Activated CD8-positive, alpha-beta memory T cell treated with anti-CD3 and anti-CD28 coated beads, Interleukin-2, amount 10 ng/mL, durations not matched to agents 7 days and 5 days (primary cell): ENCODE measurements at regions of chr19 and their contacts with region 1.

Region 1: DNA sequence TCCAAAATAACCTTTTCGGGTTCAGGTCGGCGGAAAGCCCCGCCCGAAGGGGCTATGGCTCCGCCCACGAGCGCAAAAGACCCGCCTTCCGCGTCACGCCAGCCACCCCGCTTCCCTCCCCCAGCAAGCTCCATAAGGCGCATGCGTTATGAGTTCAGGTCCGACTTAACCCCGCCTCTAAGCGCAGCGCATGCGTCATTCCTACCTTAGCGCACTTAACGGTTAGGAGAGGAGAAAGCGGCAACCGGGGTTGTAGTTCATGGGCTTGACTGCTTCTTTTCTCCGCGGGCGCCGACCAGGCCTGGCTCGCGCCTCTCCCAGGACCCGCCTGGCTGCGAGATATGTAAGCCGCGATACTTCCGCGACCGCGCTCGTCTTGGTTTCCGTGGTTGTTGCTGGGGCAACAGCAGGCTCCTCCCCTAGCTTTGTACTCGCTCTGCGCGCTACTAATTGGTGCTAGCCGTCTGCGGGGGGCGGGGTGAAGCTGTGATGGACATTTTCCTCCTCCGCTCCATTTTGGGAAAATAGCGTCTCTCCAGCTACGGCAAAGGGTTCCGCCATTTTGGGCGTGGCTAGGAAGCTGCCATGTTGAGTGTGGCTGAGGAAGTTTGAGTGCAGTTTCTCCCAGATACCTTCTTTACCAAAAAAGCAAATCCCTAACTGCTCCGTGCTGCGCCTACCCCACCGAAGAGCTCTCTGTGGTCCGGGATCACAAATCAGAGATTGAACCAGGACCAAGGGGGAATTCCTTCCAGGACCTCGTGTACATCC is at the start of gene B9D2:
- DNase-seq: peak; percentile 99
- ATAC-seq: peak; percentile 95
- H3K4me3 Mint-ChIP-seq: peak within 1 kb of the TSS; percentile 90
- H3K27ac Mint-ChIP-seq: peak within 1 kb of the TSS; percentile 95
- H3K4me1 Mint-ChIP-seq: peaks cover 27% of the 10 kb centered on the region
- H3K27me3 Mint-ChIP-seq: no peaks in the 10 kb centered on the region
- total RNA-seq, gene B9D2: 8.2 to 9.3 TPM

Region 2: GRCh38 chr19:41409288-41409687 is 45.4 kb after region 1 on chr19:
- CTCF ChIA-PET with region 1: no interaction called
- DNase-seq: no peak
- ATAC-seq: no peak
- H3K4me3 Mint-ChIP-seq: no peak overlapping the region
- H3K27ac Mint-ChIP-seq: no peak overlapping the region
- H3K4me1 Mint-ChIP-seq: peaks cover 10% of the 10 kb centered on the region
- H3K27me3 Mint-ChIP-seq: no peaks in the 10 kb centered on the region

Region 3: DNA sequence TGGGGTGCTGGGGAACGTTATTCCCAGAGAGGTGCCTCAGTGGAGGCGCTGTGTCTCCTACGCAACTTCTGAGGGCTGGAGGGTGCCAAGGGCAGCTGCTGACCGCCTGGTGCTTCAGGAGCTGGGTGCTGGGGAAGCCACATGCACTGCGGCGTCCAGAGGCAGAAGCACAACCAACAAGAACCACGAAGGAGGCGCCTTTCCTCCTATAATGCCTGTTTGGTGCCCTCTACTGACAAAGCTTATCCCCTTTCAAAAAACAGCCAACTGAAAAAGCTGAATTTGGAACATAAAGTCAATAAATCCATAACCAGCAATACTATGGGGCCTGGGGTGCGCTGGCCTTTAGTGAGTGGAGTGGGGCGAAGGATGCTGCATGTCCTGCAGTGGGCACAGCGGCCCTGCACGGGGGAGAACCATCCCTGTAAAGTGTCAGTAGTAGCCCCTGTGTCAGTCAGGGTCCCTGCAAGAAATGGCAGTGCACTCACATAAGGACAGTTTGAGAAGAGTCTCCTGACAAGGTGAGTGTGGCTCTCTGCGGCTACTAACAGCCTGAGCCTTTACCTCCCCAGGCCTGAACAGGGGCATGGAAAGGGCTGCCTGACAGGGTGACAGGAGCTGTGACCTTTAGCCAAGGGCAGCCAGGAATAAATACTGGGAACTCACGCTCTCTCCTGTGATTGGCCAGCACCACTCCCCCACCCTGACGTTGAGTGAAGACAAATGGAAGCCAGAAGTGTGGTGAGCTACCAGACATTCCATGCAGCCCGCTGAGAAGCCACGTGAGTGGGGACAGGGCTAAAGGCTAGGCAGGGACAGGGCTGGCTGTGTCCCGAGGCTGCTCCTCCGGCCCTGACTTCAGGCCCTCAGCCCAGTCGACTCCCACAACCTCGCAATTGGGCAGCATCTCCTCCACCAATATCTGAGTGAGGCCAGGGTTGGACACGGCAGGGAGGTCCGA is 67.8 kb after region 1 on chr19:
- CTCF ChIA-PET with region 1: interaction called, 12 read pairs
- DNase-seq: peak; percentile 48
- ATAC-seq: no peak
- H3K4me3 Mint-ChIP-seq: no peak overlapping the region
- H3K27ac Mint-ChIP-seq: no peak overlapping the region
- H3K4me1 Mint-ChIP-seq: peaks cover 28% of the 10 kb centered on the region
- H3K27me3 Mint-ChIP-seq: no peaks in the 10 kb centered on the region

Region 4: GRCh38 chr19:41439441-41440222 is 75.7 kb after region 1 on chr19 and contains the start of gene DMAC2:
- CTCF ChIA-PET with region 1: interaction called, 11 read pairs
- DNase-seq: peak; percentile 99
- ATAC-seq: peak; percentile 96
- H3K4me3 Mint-ChIP-seq: no peak within 1 kb of the TSS
- H3K27ac Mint-ChIP-seq: no peak within 1 kb of the TSS
- H3K4me1 Mint-ChIP-seq: peaks cover 19% of the 10 kb centered on the region
- H3K27me3 Mint-ChIP-seq: no peaks in the 10 kb centered on the region
- total RNA-seq, gene DMAC2: 43.2 to 56.5 TPM

Region 5: DNA sequence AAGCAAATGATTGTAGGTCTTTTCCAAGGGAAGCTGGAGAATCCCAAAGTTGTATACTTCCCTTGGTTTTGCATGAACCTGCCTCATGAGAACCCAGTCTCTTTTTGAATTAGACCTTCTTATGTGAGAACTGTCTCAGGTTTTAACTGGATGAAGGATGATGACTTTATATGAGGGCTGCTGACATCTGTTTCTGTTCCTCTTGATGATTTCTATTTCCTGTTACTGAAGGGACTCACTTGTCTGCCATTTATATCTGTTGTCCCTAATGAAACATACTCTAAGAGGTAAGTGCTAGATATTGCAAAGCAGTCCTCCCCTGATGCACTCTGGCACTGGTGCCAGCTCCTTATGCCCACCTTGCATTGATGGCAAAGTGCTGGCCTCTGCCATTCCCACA is 112.6 kb after region 1 on chr19:
- CTCF ChIA-PET with region 1: no interaction called
- DNase-seq: no peak
- ATAC-seq: no peak
- H3K4me3 Mint-ChIP-seq: no peak overlapping the region
- H3K27ac Mint-ChIP-seq: no peak overlapping the region
- H3K4me1 Mint-ChIP-seq: no peaks in the 10 kb centered on the region
- H3K27me3 Mint-ChIP-seq: peaks cover 57% of the 10 kb centered on the region